ENCODE measurements at regions of chr2 and their contacts with region 1.

Region 1: GRCh38 chr2:99337113-99338028 is at the start of gene EIF5B:
- DNase-seq: peak; percentile 91
- ATAC-seq: peak; percentile 81
- H3K4me3 ChIP-seq: peak within 1 kb of the TSS; percentile 82 to 92
- H3K27ac ChIP-seq: peak within 1 kb of the TSS; percentile 51
- H3K4me1 ChIP-seq: peaks cover 2 to 23% of the 10 kb centered on the region in 2 experiments
- H3K27me3 ChIP-seq: no peaks in the 10 kb centered on the region
- CTCF ChIP-seq: peak; percentile 56 to 78 (median 63)
- POLR2A ChIP-seq: peak; percentile 86
- RAD21 ChIP-seq: 0 out of 2 replicates have a peak, but pooled peaks have one; percentile 29
- total RNA-seq, gene EIF5B: 65.9 TPM

Region 2: GRCh38 chr2:99085421-99085820 is 251.9 kb before region 1 on chr2:
- CTCF ChIA-PET with region 1: no interaction called
- POLR2A ChIA-PET with region 1: no interaction called
- RAD21 ChIA-PET with region 1: no interaction called
- intact Hi-C with region 1: loop called (anchors 1 kb)
- DNase-seq: no peak
- ATAC-seq: peak; percentile 72
- H3K4me3 ChIP-seq: no peak overlapping the region
- H3K27ac ChIP-seq: no peak overlapping the region
- H3K4me1 ChIP-seq: no peaks in the 10 kb centered on the region
- H3K27me3 ChIP-seq: no peaks in the 10 kb centered on the region
- CTCF ChIP-seq: peak; percentile 25 to 49 (median 46); a peak in 5 of 6 replicates
- POLR2A ChIP-seq: no peak
- RAD21 ChIP-seq: peak; percentile 52

Region 3: GRCh38 chr2:99180755-99181623 is 156.4 kb before region 1 on chr2 and contains the starts of genes MITD1 and MRPL30:
- CTCF ChIA-PET with region 1: interaction called, 7 read pairs
- POLR2A ChIA-PET with region 1: no interaction called
- RAD21 ChIA-PET with region 1: no interaction called
- intact Hi-C with region 1: loop called (anchors 1 kb)
- DNase-seq: peak; percentile 92
- ATAC-seq: peak; percentile 88
- H3K4me3 ChIP-seq: peak within 1 kb of the TSS; percentile 72 to 78
- H3K27ac ChIP-seq: peak within 1 kb of the TSS; percentile 67
- H3K4me1 ChIP-seq: peaks cover 9 to 21% of the 10 kb centered on the region in 2 experiments; a peak in 3 of 4 replicates
- H3K27me3 ChIP-seq: no peaks in the 10 kb centered on the region
- CTCF ChIP-seq: no peak
- POLR2A ChIP-seq: peak; percentile 82
- RAD21 ChIP-seq: no peak
- total RNA-seq, gene MITD1: 20.7 TPM
- total RNA-seq, gene MRPL30: 38.1 TPM

Region 4: GRCh38 chr2:99348173-99348572 is 10.8 kb after region 1 on chr2:
- CTCF ChIA-PET with region 1: interaction called, 9 read pairs
- POLR2A ChIA-PET with region 1: interaction called, 14 read pairs
- RAD21 ChIA-PET with region 1: no interaction called
- intact Hi-C with region 1: no loop called
- DNase-seq: no peak
- ATAC-seq: no peak
- H3K4me3 ChIP-seq: no peak overlapping the region
- H3K27ac ChIP-seq: no peak overlapping the region
- H3K4me1 ChIP-seq: no peaks in the 10 kb centered on the region
- H3K27me3 ChIP-seq: no peaks in the 10 kb centered on the region
- CTCF ChIP-seq: no peak
- POLR2A ChIP-seq: no peak
- RAD21 ChIP-seq: no peak

Region 5: DNA sequence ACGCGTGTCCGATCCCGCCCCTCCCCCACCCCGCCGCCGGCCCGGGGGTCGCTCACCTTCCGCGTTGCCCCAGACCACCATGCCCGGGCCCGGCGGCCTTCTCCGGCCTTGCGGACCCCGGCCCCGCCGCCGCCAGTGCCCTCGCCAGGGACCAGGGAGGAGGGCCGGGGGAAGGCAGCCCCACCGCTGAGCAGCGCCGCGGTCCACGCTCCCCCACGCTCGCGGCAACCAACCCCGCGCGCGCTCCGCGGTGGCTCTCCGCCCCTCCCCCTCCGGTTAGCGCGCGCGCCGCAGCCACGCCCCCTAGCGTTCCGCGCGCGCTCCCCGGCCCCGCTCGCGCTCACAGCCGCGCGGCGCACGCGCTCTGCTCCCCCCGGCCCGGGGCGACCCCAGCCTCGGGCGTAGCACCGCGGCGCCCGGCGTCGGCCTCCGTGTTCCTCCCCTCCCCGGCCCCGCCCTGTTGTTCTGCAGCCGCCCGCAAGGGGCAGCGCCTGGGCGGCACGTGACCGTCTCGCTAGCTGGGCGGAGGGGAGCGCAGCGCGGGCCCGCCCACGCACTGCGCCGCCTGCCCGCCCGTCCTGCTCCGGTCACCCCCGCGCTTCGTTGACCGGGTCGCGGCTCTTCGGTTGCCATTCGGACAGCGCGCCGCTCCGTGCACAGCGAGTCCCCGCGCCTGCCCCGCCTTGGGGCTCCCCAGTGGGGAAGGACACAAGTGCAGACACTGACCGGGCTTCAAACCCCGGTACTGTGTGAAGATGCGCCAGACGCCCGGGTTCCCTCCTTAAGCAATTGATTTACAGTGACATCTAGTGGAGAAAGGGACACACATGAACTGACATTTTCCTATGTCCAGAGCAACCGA is 152.6 kb after region 1 on chr2 and contains the start of gene REV1:
- CTCF ChIA-PET with region 1: interaction called, 14 read pairs
- POLR2A ChIA-PET with region 1: interaction called, 4 read pairs
- RAD21 ChIA-PET with region 1: interaction called in 1 of 2 experiments, 4 read pairs
- intact Hi-C with region 1: loop called (anchors 1 kb)
- DNase-seq: peak; percentile 83
- ATAC-seq: peak; percentile 85
- H3K4me3 ChIP-seq: peak within 1 kb of the TSS; percentile 68 to 88
- H3K27ac ChIP-seq: peak within 1 kb of the TSS; percentile 87
- H3K4me1 ChIP-seq: peaks cover 9 to 27% of the 10 kb centered on the region in 2 experiments; a peak in 3 of 4 replicates
- H3K27me3 ChIP-seq: no peaks in the 10 kb centered on the region
- CTCF ChIP-seq: peak; percentile 51 to 84 (median 70)
- POLR2A ChIP-seq: peak; percentile 27
- RAD21 ChIP-seq: peak; percentile 93
- total RNA-seq, gene REV1: 34.3 TPM

Region 6: GRCh38 chr2:99507937-99508818 is 170.8 kb after region 1 on chr2:
- CTCF ChIA-PET with region 1: no interaction called
- POLR2A ChIA-PET with region 1: no interaction called
- RAD21 ChIA-PET with region 1: no interaction called
- intact Hi-C with region 1: no loop called
- DNase-seq: no peak
- ATAC-seq: no peak
- H3K4me3 ChIP-seq: no peak overlapping the region
- H3K27ac ChIP-seq: no peak overlapping the region
- H3K4me1 ChIP-seq: peaks cover 9 to 18% of the 10 kb centered on the region in 2 experiments
- H3K27me3 ChIP-seq: no peaks in the 10 kb centered on the region
- CTCF ChIP-seq: no peak
- POLR2A ChIP-seq: no peak
- RAD21 ChIP-seq: no peak

Region 7: GRCh38 chr2:99524056-99524455 is 186.7 kb after region 1 on chr2:
- CTCF ChIA-PET with region 1: no interaction called
- POLR2A ChIA-PET with region 1: no interaction called
- RAD21 ChIA-PET with region 1: no interaction called
- intact Hi-C with region 1: no loop called
- DNase-seq: no peak
- ATAC-seq: no peak
- H3K4me3 ChIP-seq: no peak overlapping the region
- H3K27ac ChIP-seq: no peak overlapping the region
- H3K4me1 ChIP-seq: no peaks in the 10 kb centered on the region
- H3K27me3 ChIP-seq: no peaks in the 10 kb centered on the region
- CTCF ChIP-seq: no peak
- POLR2A ChIP-seq: no peak
- RAD21 ChIP-seq: no peak

Region 8: DNA sequence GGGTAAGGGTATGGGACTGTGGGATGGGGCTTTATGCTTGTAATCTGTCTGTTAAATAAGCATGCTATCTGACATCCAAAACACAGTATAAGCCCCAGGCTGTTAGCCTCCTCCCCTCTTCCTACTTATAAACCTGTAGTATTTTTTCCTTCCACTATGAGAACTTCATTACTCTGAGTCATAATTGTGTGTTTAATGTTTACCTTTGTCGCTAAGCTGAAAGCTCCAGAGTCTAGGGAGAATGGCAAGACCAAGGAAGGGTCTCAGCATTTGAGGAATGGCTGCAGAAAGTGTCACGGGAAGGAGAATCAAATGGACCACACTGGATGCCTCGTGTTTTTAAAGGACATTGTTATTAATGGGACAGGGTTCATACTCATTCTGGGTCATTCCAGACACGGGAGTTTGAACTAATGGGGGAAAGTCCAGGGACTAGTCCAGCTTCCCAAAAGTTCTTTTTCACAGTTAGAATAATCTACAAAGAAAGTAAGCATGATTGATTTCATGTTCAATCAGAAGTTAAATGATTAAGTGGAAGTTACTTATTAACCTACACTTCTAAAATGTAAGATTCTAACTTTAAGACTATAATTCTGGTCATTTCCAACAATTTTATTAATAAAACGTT is 512.8 kb after region 1 on chr2:
- CTCF ChIA-PET with region 1: no interaction called
- POLR2A ChIA-PET with region 1: no interaction called
- RAD21 ChIA-PET with region 1: no interaction called
- intact Hi-C with region 1: no loop called
- DNase-seq: no peak
- ATAC-seq: no peak
- H3K4me3 ChIP-seq: no peak overlapping the region
- H3K27ac ChIP-seq: no peak overlapping the region
- H3K4me1 ChIP-seq: no peaks in the 10 kb centered on the region
- H3K27me3 ChIP-seq: peaks cover 64% of the 10 kb centered on the region
- CTCF ChIP-seq: no peak
- POLR2A ChIP-seq: no peak
- RAD21 ChIP-seq: no peak